Mammary epithelial cell (primary cell): ENCODE measurements at regions of chr14 and their contacts with region 1.

Region 1: GRCh38 chr14:63770187-63770807 is 42.4 kb upstream of the SGPP1 start:
- DNase-seq: peak; percentile 40
- H3K4me3 ChIP-seq: no peak overlapping the region
- H3K27ac ChIP-seq: no peak overlapping the region
- H3K4me1 ChIP-seq: peaks cover 11% of the 10 kb centered on the region
- H3K27me3 ChIP-seq: no peaks in the 10 kb centered on the region
- CTCF ChIP-seq: peak; percentile 54 to 72

Region 2: DNA sequence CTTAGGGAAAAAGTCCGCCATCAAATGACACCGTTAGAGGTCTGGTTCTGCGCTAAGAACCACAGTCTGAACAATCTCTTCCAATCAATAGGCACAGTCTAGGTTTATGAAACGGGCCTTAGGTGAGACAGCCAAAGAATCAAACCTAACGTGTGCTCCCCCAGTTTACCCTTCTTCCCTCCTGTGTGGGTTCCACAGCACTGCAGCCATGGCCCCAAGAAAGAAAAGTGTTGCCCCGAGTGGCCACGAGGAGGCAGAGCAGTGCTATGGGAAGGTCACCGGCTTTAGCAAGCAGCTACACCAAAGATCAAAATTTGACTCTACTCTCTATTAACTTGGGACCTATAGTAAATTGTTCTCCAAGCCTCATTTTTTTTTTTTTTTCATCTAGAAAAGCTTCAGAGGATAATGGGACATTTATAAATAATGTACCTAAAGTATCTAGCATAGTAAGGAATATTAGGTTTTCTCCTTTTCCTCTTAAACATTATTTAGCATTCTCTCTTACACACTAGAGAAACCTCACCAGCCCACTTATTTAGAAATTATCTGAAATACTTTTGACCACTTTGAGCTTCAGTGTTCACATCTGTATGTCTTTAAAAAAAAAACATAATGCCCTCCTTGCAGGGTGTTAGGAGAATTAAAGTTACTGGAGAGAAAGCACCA is 381.4 kb before region 1 on chr14:
- CTCF ChIA-PET with region 1: no interaction called
- dilution Hi-C with region 1: no loop called
- in situ Hi-C with region 1: loop called in 1 of 2 experiments (anchors 25 kb)
- intact Hi-C with region 1: loop called (anchors 1 kb)
- DNase-seq: peak; percentile 26
- H3K4me3 ChIP-seq: no peak overlapping the region
- H3K27ac ChIP-seq: no peak overlapping the region
- H3K4me1 ChIP-seq: no peaks in the 10 kb centered on the region
- H3K27me3 ChIP-seq: no peaks in the 10 kb centered on the region
- CTCF ChIP-seq: peak; percentile 85 to 89

Region 3: DNA sequence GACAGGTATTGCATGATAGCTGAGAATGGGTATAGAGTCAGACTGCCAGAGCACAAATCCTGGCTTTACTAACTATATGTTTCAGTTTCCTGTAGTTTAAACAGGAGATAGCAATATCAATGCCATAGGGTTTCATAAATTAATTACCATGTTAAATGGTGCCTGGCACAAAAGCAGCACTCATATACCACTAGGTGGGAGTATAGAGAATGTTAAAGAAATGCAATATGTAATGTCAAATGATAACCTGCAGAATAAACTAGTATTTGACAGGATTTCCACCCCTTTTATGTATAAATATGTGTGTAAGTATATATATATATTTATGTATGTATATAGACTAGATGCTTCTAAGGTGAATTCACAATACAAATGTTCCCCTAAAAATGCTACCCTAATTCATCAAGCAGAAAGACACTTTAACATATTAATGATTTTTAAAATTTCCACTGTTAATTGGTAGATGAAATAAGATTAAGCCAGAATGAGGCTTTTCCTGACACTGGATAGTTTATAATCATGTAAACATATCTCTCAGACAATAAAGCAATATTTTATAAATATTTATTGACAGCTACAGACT is 137.3 kb before region 1 on chr14:
- CTCF ChIA-PET with region 1: no interaction called
- dilution Hi-C with region 1: no loop called
- in situ Hi-C with region 1: no loop called
- intact Hi-C with region 1: loop called (anchors 1 kb)
- DNase-seq: no peak
- H3K4me3 ChIP-seq: no peak overlapping the region
- H3K27ac ChIP-seq: no peak overlapping the region
- H3K4me1 ChIP-seq: no peaks in the 10 kb centered on the region
- H3K27me3 ChIP-seq: no peaks in the 10 kb centered on the region
- CTCF ChIP-seq: peak; percentile 59 to 72

Region 4: DNA sequence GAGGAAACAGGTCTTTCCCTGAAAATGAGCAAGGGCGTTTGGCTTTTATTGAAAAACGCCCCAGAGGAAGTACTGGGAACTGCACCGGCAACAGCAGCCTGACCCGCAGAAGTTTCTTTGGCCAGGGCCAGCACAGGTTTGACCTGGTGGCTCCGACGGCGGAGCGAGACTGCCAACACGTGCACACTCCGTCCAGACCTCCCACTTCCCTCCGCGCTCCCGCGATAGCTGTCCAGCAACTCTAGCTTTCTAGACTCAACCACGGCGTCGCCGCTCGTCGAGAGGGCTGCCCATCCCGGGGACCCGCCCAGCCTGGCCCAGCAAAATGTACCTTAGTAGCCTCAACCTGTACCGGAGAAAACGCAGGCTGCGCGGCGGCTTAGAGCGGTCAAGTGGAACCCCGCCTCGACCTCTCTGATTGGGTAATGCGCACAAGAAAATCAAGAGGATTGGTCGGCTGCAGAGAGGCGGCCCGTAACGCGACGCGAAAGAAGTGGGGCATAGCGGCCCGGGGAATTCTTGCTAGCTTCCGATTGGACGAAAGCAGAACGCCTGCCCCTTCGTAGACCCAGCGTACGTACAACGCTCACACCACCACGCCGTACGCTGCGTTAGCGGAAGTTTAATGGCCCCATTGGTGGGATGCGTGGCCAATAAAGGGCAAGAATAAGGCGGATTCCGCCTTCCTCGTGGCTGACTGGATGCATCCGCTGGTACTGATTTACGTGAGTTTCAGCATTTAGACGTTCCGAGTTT is 128.6 kb before region 1 on chr14 and contains the start of gene WDR89:
- CTCF ChIA-PET with region 1: interaction called, 4 read pairs
- dilution Hi-C with region 1: no loop called
- in situ Hi-C with region 1: no loop called
- intact Hi-C with region 1: loop called (anchors 2 kb)
- DNase-seq: peak; percentile 100
- H3K4me3 ChIP-seq: peak within 1 kb of the TSS; percentile 66 to 91 (median 77)
- H3K27ac ChIP-seq: peak within 1 kb of the TSS; percentile 97
- H3K4me1 ChIP-seq: peaks cover 3% of the 10 kb centered on the region
- H3K27me3 ChIP-seq: no peaks in the 10 kb centered on the region
- CTCF ChIP-seq: peak; percentile 77 to 83
- total RNA-seq, gene WDR89: 10.5 to 13.0 TPM

Region 5: GRCh38 chr14:63705561-63706070 is 64.7 kb before region 1 on chr14:
- CTCF ChIA-PET with region 1: no interaction called
- dilution Hi-C with region 1: no loop called
- in situ Hi-C with region 1: no loop called
- intact Hi-C with region 1: no loop called
- DNase-seq: no peak
- H3K4me3 ChIP-seq: no peak overlapping the region
- H3K27ac ChIP-seq: no peak overlapping the region
- H3K4me1 ChIP-seq: no peaks in the 10 kb centered on the region
- H3K27me3 ChIP-seq: no peaks in the 10 kb centered on the region
- CTCF ChIP-seq: no peak